ENCODE measurements at regions of chr9 and their contacts with region 1.

Region 1: GRCh38 chr9:99807276-99807852 is 14.3 kb upstream of the NR4A3 start:
- DNase-seq: no peak
- ATAC-seq: peak; percentile 76
- H3K4me3 ChIP-seq: no peak overlapping the region
- H3K27ac ChIP-seq: no peak overlapping the region
- H3K4me1 ChIP-seq: peaks cover 15 to 28% of the 10 kb centered on the region in 2 experiments
- H3K27me3 ChIP-seq: no peaks in the 10 kb centered on the region
- CTCF ChIP-seq: peak; percentile 62 to 85 (median 79); a peak in 5 of 6 replicates
- POLR2A ChIP-seq: no peak
- RAD21 ChIP-seq: peak; percentile 74

Region 2: DNA sequence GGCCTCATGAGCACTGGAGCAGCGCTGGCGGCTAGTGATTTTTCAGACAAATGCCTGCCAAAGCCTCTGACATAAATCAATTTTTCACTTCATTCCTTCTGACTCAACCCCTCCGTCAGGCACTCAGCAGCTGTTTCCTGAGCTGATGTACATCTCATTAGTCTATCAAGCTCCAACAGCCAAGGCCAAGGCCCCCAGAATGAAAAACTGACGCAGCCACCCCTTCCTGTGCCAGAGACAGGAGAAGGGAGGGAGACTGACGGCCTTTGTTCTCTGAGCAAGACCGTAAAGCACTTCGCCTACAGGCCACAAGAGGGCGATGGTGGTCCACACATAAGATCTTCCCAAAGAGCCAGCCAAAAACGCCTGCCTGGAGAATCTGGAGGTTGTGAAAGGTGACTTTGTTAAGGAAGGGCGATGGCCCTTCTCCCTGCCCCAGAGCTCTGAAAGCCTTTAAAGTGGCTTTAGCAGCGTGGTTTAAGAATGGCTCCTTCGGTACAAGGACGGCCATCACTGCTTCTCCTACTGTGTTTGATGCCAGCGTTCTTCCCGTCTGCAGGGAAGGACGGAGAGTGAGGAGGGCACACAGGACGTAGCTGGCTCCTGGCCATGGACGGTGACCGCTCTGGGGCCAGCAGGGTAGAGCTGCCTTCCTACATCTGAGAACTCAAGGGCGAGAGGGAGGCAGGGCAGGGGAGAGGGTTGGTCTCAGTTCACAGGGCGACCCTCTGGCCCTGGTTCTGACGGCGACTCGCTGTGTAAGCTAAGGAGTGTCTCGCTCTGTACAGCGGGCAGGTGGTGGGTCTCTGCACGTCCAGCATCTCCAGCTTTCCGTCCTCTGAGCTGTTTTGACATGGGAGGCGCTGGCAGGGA is 622.7 kb before region 1 on chr9:
- CTCF ChIA-PET with region 1: no interaction called
- POLR2A ChIA-PET with region 1: no interaction called
- RAD21 ChIA-PET with region 1: no interaction called
- intact Hi-C with region 1: loop called (anchors 10 kb)
- DNase-seq: peak; percentile 74
- ATAC-seq: peak; percentile 94
- H3K4me3 ChIP-seq: no peak overlapping the region
- H3K27ac ChIP-seq: no peak overlapping the region
- H3K4me1 ChIP-seq: peaks cover 0 to 4% of the 10 kb centered on the region in 2 experiments; a peak in 1 of 4 replicates
- H3K27me3 ChIP-seq: peaks cover 6% of the 10 kb centered on the region; the same call in 1 of the 2 replicates
- CTCF ChIP-seq: peak; percentile 66 to 94 (median 91)
- POLR2A ChIP-seq: no peak
- RAD21 ChIP-seq: peak; percentile 88

Region 3: GRCh38 chr9:99266255-99267023 is 540.9 kb before region 1 on chr9:
- CTCF ChIA-PET with region 1: no interaction called
- POLR2A ChIA-PET with region 1: no interaction called
- RAD21 ChIA-PET with region 1: no interaction called
- intact Hi-C with region 1: loop called (anchors 10 kb)
- DNase-seq: peak; percentile 69
- ATAC-seq: peak; percentile 95
- H3K4me3 ChIP-seq: peak overlapping the region in 1 of 2 experiments; percentile 7; a peak in 1 of 4 replicates
- H3K27ac ChIP-seq: no peak overlapping the region
- H3K4me1 ChIP-seq: peaks cover 0 to 15% of the 10 kb centered on the region in 2 experiments; a peak in 2 of 4 replicates
- H3K27me3 ChIP-seq: no peaks in the 10 kb centered on the region
- CTCF ChIP-seq: peak; percentile 76 to 97 (median 89)
- POLR2A ChIP-seq: no peak
- RAD21 ChIP-seq: peak; percentile 93

Region 4: GRCh38 chr9:99299211-99300102 is 507.9 kb before region 1 on chr9:
- CTCF ChIA-PET with region 1: interaction called, 3 read pairs
- POLR2A ChIA-PET with region 1: no interaction called
- RAD21 ChIA-PET with region 1: no interaction called
- intact Hi-C with region 1: loop called (anchors 10 kb)
- DNase-seq: no peak
- ATAC-seq: peak; percentile 63
- H3K4me3 ChIP-seq: no peak overlapping the region
- H3K27ac ChIP-seq: no peak overlapping the region
- H3K4me1 ChIP-seq: peaks cover 0 to 4% of the 10 kb centered on the region in 2 experiments; a peak in 1 of 4 replicates
- H3K27me3 ChIP-seq: no peaks in the 10 kb centered on the region
- CTCF ChIP-seq: peak; percentile 9 to 46 (median 44); a peak in 3 of 6 replicates
- POLR2A ChIP-seq: no peak
- RAD21 ChIP-seq: peak; percentile 75

Region 5: GRCh38 chr9:100011062-100011681 is 203.8 kb after region 1 on chr9:
- CTCF ChIA-PET with region 1: no interaction called
- POLR2A ChIA-PET with region 1: no interaction called
- RAD21 ChIA-PET with region 1: interaction called in 1 of 2 experiments, 5 read pairs
- intact Hi-C with region 1: loop called (anchors 1 kb)
- DNase-seq: peak; percentile 59
- ATAC-seq: peak; percentile 54
- H3K4me3 ChIP-seq: no peak overlapping the region
- H3K27ac ChIP-seq: no peak overlapping the region
- H3K4me1 ChIP-seq: no peaks in the 10 kb centered on the region
- H3K27me3 ChIP-seq: no peaks in the 10 kb centered on the region
- CTCF ChIP-seq: peak; percentile 54 to 75 (median 58); a peak in 5 of 6 replicates
- POLR2A ChIP-seq: no peak
- RAD21 ChIP-seq: peak; percentile 79

Region 6: DNA sequence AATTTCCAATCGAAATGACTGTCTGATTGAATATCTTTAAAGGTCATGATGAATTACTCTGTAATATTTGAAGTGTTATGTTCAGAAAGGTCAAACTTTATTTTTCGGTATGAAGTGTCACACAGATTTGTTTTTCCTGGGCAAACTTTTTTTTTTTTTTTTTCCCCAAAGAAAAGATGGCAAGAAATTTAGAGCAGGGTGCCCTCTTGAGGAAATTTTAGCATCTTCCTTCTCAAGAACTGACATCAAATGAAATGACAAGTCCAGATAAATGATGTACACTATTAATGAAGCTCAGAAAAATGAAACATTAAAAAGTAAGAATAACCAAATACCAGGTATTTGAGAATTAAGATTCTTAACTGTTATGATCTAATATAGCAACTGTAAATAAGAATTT is 415.3 kb after region 1 on chr9:
- CTCF ChIA-PET with region 1: no interaction called
- POLR2A ChIA-PET with region 1: no interaction called
- RAD21 ChIA-PET with region 1: no interaction called
- intact Hi-C with region 1: loop called (anchors 10 kb)
- DNase-seq: no peak
- ATAC-seq: no peak
- H3K4me3 ChIP-seq: no peak overlapping the region
- H3K27ac ChIP-seq: no peak overlapping the region
- H3K4me1 ChIP-seq: no peaks in the 10 kb centered on the region
- H3K27me3 ChIP-seq: no peaks in the 10 kb centered on the region
- CTCF ChIP-seq: peak; percentile 27 to 57 (median 32); a peak in 4 of 6 replicates
- POLR2A ChIP-seq: no peak
- RAD21 ChIP-seq: peak; percentile 58

Region 7: DNA sequence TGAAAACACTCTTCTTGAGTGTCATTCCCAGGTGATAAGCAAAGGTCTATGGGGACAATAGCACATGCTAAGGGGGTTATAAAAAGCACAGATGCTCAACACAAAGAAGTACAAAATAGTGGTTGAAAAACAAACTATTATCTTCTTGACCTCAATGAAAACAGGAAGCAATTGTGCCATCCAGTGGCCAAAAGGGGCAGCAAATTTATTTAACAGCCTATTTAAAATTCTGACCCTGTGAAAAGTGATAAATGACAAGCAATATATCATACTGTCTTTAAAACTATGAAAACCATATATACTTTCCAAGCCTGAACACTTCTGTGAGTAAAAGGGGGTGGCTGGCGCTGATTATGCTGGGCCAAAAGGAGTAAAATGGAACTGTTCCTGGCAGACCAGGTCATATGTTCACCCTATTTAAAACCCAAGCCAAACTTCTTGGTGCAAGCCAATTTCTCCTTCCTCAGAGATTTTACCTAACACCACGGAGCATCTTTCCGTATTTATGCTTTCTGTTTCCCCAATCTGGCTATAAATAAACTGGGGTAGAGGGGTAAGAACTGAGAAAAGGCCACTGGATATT is 515.7 kb after region 1 on chr9:
- CTCF ChIA-PET with region 1: interaction called, 3 read pairs
- POLR2A ChIA-PET with region 1: no interaction called
- RAD21 ChIA-PET with region 1: no interaction called
- intact Hi-C with region 1: loop called (anchors 5 kb)
- DNase-seq: peak; percentile 10
- ATAC-seq: no peak; the same call in 1 of the 2 replicates
- H3K4me3 ChIP-seq: no peak overlapping the region
- H3K27ac ChIP-seq: no peak overlapping the region
- H3K4me1 ChIP-seq: no peaks in the 10 kb centered on the region
- H3K27me3 ChIP-seq: no peaks in the 10 kb centered on the region
- CTCF ChIP-seq: peak; percentile 39 to 79 (median 69); a peak in 5 of 6 replicates
- POLR2A ChIP-seq: no peak
- RAD21 ChIP-seq: peak; percentile 41